GM12878 (cell line): ENCODE measurements at regions of chr9 and their contacts with region 1.

Region 1: DNA sequence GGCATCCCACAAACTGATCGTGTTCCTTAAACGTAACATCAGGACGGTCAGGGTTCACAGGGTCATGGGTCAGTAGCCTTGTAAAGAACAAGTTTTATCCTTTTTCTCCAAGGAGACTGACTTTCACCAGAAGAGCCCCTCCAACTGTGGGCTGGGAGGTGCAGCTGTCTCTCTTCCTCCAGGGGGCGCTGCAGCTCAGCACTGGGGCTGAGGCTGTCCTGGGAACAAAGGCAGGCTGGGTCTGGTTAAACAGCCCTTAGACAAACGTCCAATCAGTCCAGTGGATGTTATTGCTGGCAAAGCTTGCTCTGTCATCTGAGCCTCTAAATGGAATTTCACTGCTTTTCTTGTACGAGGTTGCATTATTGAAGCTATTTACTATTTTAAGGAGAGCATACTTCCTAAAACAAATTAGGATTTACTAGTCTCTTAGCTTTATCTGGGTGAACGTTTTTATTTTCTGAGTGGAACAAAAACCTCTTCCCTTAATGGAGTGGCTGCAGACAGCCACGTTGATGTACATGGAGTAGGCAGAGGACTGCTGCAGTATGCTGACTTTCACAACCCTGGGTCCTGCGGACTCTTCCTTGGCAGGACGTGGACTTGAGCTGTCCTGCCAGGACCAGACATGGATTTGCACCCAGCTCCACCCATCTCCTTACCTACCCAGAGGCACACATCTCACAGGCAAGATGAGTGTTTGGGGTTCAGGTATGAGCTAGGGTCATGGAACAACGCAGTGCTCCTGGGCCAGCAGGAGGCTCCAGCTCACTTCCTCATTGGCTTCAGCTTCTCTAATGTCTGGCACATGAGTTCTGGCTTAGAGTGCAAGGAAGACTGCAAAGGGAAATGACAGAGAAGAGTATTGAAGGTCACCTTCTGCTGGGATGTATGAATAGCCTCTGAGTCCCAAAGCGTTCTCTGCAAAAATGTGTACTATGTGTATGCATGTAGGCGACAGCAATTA is 7.8 kb downstream of the EXOSC2 start:
- DNase-seq: no peak
- ATAC-seq: peak; percentile 95
- H3K4me3 ChIP-seq: no peak overlapping the region
- H3K27ac ChIP-seq: no peak overlapping the region
- H3K4me1 ChIP-seq: peaks cover 19% of the 10 kb centered on the region
- H3K27me3 ChIP-seq: no peaks in the 10 kb centered on the region
- CTCF ChIP-seq: peak; percentile 73 to 88 (median 87)
- EP300 ChIP-seq: no peak
- POLR2A ChIP-seq: peak; percentile 32
- RAD21 ChIP-seq: peak; percentile 64

Region 2: DNA sequence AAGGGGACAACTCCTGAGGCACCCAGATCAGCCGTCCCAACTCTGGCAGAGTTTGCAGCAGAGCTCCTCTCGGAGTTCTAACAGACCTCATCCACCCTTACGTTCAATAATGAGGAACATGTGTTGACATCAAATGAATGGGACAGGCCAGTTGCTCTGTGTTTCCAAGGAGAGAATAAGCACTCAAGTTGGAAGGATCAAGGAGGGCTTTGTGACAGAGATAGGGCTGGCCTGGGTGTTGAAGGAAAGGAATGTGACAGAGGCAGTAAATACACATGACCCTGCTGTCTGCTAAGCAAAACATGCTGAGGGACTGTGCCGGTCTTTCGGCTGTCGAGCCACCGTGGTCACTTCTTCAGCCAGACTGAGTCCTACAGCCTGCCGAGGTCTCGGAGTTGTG is 599.4 kb before region 1 on chr9:
- CTCF ChIA-PET with region 1: no interaction called
- POLR2A ChIA-PET with region 1: no interaction called
- RAD21 ChIA-PET with region 1: no interaction called
- SMC1A ChIA-PET with region 1: no interaction called
- in situ Hi-C with region 1: no loop called
- intact Hi-C with region 1: no loop called
- DNase-seq: no peak
- ATAC-seq: no peak
- H3K4me3 ChIP-seq: no peak overlapping the region
- H3K27ac ChIP-seq: no peak overlapping the region
- H3K4me1 ChIP-seq: peaks cover 3% of the 10 kb centered on the region
- H3K27me3 ChIP-seq: no peaks in the 10 kb centered on the region
- CTCF ChIP-seq: no peak
- EP300 ChIP-seq: no peak
- POLR2A ChIP-seq: no peak
- RAD21 ChIP-seq: no peak

Region 3: GRCh38 chr9:130682490-130683121 is 18.7 kb before region 1 on chr9:
- CTCF ChIA-PET with region 1: interaction called, 29 read pairs
- POLR2A ChIA-PET with region 1: no interaction called
- RAD21 ChIA-PET with region 1: interaction called, 4 read pairs
- SMC1A ChIA-PET with region 1: interaction called, 6 read pairs
- in situ Hi-C with region 1: no loop called
- intact Hi-C with region 1: no loop called
- DNase-seq: no peak
- ATAC-seq: peak; percentile 73
- H3K4me3 ChIP-seq: peak overlapping the region; percentile 72
- H3K27ac ChIP-seq: no peak overlapping the region
- H3K4me1 ChIP-seq: peaks cover 7% of the 10 kb centered on the region
- H3K27me3 ChIP-seq: peaks cover 0 to 5% of the 10 kb centered on the region in 2 experiments; a peak in 3 of 4 replicates
- CTCF ChIP-seq: peak; percentile 75 to 79 (median 75)
- EP300 ChIP-seq: no peak
- POLR2A ChIP-seq: no peak
- RAD21 ChIP-seq: peak; percentile 87

Region 4: GRCh38 chr9:130770679-130771442 is 69.5 kb after region 1 on chr9:
- CTCF ChIA-PET with region 1: interaction called, 22 read pairs
- POLR2A ChIA-PET with region 1: interaction called, 3 read pairs
- RAD21 ChIA-PET with region 1: interaction called, 10 read pairs
- SMC1A ChIA-PET with region 1: interaction called, 14 read pairs
- in situ Hi-C with region 1: no loop called
- intact Hi-C with region 1: no loop called
- DNase-seq: no peak
- ATAC-seq: peak; percentile 83
- H3K4me3 ChIP-seq: no peak overlapping the region
- H3K27ac ChIP-seq: no peak overlapping the region
- H3K4me1 ChIP-seq: peaks cover 27% of the 10 kb centered on the region
- H3K27me3 ChIP-seq: no peaks in the 10 kb centered on the region
- CTCF ChIP-seq: peak; percentile 55 to 58 (median 55)
- EP300 ChIP-seq: no peak
- POLR2A ChIP-seq: no peak
- RAD21 ChIP-seq: peak; percentile 85

Region 5: DNA sequence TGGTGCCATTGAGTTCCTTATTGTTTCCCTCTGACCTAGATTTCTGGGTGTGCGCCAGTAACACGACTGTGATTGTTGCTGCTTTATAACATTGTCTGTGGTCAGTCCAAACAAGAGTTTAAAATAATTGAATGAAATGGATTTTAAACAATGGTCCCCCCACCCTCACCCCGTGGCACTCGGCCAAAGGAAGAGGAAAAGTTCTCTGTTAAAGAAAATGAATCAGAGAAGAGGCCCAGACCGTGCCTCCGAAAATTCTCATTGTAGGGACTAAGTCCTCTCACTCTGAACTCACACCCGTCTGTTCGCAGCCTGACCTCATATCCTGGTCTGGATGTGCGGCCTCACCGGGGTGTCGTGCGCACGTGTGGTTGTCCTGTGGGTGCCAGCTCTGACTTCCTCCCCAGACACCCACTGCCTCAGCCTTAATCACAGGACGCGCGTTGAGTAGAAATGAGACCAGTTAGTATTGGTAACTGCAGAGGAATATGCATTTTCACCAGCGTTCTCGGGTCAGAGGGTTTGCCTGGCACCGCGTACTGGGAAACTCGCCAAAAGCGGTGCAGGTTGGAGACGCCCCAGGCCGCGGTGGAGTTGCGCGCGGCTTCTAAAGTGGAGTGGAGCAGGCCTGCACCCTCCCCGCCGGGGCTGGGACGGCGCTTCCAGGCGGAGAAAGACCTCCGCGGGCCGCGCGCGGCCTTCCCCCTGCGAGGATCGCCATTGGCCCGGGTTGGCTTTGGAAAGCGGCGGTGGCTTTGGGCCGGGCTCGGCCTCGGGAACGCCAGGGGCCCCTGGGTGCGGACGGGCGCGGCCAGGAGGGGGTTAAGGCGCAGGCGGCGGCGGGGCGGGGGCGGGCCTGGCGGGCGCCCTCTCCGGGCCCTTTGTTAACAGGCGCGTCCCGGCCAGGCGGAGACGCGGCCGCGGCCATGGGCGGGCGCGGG is 133.3 kb after region 1 on chr9 and contains the start of gene ABL1:
- CTCF ChIA-PET with region 1: interaction called, 13 read pairs
- POLR2A ChIA-PET with region 1: interaction called, 3 read pairs
- RAD21 ChIA-PET with region 1: no interaction called
- SMC1A ChIA-PET with region 1: no interaction called
- in situ Hi-C with region 1: no loop called
- intact Hi-C with region 1: no loop called
- DNase-seq: peak; percentile 51
- ATAC-seq: peak; percentile 91
- H3K4me3 ChIP-seq: peak within 1 kb of the TSS; percentile 77
- H3K27ac ChIP-seq: peak within 1 kb of the TSS; percentile 84
- H3K4me1 ChIP-seq: peaks cover 3% of the 10 kb centered on the region; the same call in 1 of the 2 replicates
- H3K27me3 ChIP-seq: no peaks in the 10 kb centered on the region
- CTCF ChIP-seq: no peak
- EP300 ChIP-seq: peak in 1 of 2 experiments; percentile 31; a peak in 1 of 4 replicates
- POLR2A ChIP-seq: peak; percentile 82
- RAD21 ChIP-seq: no peak
- polyA plus RNA-seq, gene ABL1: 0.79 to 1.6 TPM

Region 6: GRCh38 chr9:130860458-130861316 is 159.3 kb after region 1 on chr9:
- CTCF ChIA-PET with region 1: interaction called, 267 read pairs
- POLR2A ChIA-PET with region 1: no interaction called
- RAD21 ChIA-PET with region 1: interaction called, 15 read pairs
- SMC1A ChIA-PET with region 1: interaction called, 21 read pairs
- in situ Hi-C with region 1: loop called (anchors 5 kb)
- intact Hi-C with region 1: no loop called
- DNase-seq: no peak
- ATAC-seq: no peak
- H3K4me3 ChIP-seq: no peak overlapping the region
- H3K27ac ChIP-seq: no peak overlapping the region
- H3K4me1 ChIP-seq: no peaks in the 10 kb centered on the region
- H3K27me3 ChIP-seq: no peaks in the 10 kb centered on the region
- CTCF ChIP-seq: no peak
- EP300 ChIP-seq: no peak
- POLR2A ChIP-seq: no peak
- RAD21 ChIP-seq: no peak

Region 7: DNA sequence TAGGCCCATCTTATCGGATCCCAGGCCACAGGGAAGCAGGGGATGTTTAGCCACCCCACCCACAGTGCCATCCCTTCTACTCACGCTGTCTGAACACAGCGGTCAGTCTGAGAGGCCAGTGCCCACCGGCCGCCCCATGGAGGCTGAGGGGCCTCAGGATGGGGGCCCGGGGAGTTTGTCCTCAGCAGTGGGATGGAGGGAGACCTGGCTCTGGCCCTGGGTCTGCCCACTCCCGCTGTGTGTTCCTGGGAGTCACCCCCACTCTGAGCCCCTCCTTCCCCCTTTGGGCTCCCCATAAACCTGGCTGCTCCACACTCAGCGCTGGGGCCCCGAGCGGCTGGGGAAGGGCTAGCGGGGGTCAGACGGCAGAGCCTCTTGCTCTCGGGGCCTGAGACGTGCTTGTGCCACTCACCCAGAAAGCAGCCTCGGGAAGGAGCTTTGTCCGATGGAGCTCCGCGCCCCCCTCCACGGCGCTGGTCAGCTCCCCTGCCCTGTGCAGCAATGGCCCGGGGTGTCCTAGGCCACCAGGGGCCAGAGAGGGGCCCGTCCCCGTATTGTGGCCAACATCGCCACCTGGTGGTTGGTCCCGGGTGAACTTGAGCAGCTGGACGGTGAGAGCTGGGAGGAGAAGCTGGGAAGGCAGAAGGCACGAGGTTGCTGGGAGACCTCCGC is 296.7 kb after region 1 on chr9:
- CTCF ChIA-PET with region 1: interaction called, 10 read pairs
- POLR2A ChIA-PET with region 1: no interaction called
- RAD21 ChIA-PET with region 1: interaction called, 4 read pairs
- SMC1A ChIA-PET with region 1: interaction called, 4 read pairs
- in situ Hi-C with region 1: no loop called
- intact Hi-C with region 1: no loop called
- DNase-seq: no peak
- ATAC-seq: peak; percentile 91
- H3K4me3 ChIP-seq: no peak overlapping the region
- H3K27ac ChIP-seq: no peak overlapping the region
- H3K4me1 ChIP-seq: no peaks in the 10 kb centered on the region
- H3K27me3 ChIP-seq: peaks cover 0 to 2% of the 10 kb centered on the region in 2 experiments; a peak in 2 of 4 replicates
- CTCF ChIP-seq: peak; percentile 57 to 69 (median 60)
- EP300 ChIP-seq: no peak
- POLR2A ChIP-seq: no peak
- RAD21 ChIP-seq: peak; percentile 62